Esophagus squamous epithelium (tissue), 5 donors: ENCODE measurements at regions of chr5 and their contacts with region 1.

Region 1: DNA sequence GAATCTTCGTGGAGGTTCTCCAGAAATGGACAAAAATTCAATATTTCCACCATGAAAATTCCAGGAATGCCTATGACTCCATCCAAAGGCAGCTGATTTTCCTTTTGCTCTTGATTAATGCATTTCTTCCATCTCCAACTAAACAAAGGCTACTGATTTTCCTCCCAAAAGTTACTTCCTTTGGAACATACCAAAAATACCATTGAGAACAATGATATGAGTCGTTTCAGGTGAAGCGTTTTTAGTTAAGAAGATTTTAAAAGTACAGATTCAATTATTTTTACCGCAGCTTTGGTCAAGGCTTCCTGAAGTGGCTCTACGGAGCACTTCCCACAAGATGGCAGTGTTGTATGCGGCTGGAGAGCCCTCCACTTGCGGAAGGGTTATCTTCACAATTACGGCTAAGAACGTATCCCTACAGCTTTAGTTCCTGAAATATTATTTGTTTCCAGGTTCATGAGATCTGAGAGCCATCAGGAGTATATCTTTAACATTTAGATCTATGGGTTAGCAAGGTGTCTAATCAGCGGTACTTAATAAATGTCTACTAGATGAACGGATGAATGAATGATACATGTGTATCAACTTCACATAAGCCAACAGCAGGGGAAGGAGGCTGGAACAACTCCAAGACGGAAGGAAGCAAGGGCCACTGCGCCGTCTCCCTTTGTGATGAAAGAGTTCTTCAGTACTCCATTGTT is 35.9 kb upstream of the ARSB start:
- DNase-seq: no peak
- H3K4me3 ChIP-seq: peak overlapping the region in 3 of 4 donors; percentile 2 to 47 (median 9)
- H3K27ac ChIP-seq: no peak overlapping the region
- H3K4me1 ChIP-seq: peaks cover 0 to 20% (median 10%) of the 10 kb centered on the region in 3 donors
- H3K27me3 ChIP-seq: peaks cover 0 to 5% (median 0%) of the 10 kb centered on the region in 4 donors
- CTCF ChIP-seq: peak; percentile 60 to 74 (median 66)
- POLR2A ChIP-seq: no peak

Region 2: GRCh38 chr5:79081779-79082178 is 60.8 kb after region 1 on chr5:
- intact Hi-C with region 1: no loop called
- DNase-seq: no peak
- H3K4me3 ChIP-seq: no peak overlapping the region
- H3K27ac ChIP-seq: no peak overlapping the region
- H3K4me1 ChIP-seq: no peaks in the 10 kb centered on the region
- H3K27me3 ChIP-seq: no peaks in the 10 kb centered on the region
- CTCF ChIP-seq: no peak
- POLR2A ChIP-seq: no peak

Region 3: DNA sequence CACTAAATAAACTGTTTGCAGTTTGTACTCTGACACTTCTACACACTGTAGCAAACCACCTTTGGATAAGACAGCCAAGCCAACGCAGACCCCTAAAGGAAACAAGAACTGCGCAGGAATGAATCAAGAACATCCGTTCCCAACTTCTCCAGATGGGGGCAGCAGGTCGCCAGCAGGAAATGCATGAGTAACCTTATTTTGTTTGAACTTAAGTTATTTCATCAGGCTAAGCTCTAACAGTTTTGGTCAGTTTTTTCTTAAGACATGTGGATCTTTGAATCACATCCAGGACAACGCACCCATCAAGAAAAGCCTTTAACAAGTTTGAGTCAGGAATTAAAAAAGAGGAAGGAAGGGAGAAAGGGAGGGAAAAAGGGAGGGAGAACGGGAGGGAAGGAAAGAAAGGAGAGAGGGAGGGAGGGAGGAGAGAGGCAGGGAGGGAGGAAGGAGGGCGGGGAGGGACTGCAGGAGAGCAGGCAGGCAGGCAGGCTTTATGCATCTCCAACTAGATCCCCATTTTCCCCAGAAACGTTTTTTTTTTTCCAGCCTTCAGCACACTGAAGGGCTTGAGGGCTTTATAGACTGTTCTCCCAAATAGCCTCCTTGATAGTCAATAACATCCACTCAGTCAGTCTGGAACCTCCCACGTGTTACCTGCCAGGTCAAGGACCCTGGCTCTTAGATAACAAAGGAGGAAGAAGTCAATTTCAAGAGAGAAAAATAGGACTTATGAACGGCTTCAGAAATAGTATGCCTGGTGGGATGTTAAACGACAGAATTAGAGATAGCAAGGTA is 112.8 kb after region 1 on chr5:
- intact Hi-C with region 1: loop called (anchors 5 kb)
- DNase-seq: no peak
- H3K4me3 ChIP-seq: peak overlapping the region in 3 of 4 donors; percentile 25 to 56 (median 25)
- H3K27ac ChIP-seq: peak overlapping the region; percentile 10 to 78 (median 73)
- H3K4me1 ChIP-seq: peaks cover 0 to 15% (median 7%) of the 10 kb centered on the region in 3 donors
- H3K27me3 ChIP-seq: no peaks in the 10 kb centered on the region
- CTCF ChIP-seq: peak; percentile 65 to 81 (median 74)
- POLR2A ChIP-seq: no peak

Region 4: DNA sequence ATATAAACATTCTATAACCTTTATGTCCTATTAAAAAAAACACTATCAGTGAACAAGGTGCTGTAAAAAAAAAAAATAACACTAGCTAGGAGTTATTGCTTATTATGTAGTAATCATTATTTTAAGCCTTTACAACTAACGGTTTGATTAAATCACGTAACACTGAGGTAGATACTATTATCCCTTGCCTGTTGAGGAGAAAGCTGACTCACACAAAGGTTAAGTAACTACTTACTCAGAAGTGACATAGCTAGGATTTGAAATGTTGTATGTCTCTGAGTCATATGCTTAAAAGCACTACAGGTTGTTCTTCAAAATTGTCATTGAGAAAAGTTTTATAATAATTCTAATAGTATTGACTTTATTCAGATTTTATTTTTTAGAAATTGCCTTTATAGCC is 600.0 kb after region 1 on chr5:
- intact Hi-C with region 1: no loop called
- DNase-seq: no peak
- H3K4me3 ChIP-seq: no peak overlapping the region
- H3K27ac ChIP-seq: no peak overlapping the region
- H3K4me1 ChIP-seq: peaks cover 0 to 10% (median 0%) of the 10 kb centered on the region in 3 donors
- H3K27me3 ChIP-seq: no peaks in the 10 kb centered on the region
- CTCF ChIP-seq: no peak
- POLR2A ChIP-seq: no peak